Heart right ventricle (tissue), 16 donors: ENCODE measurements at regions of chr3 and their contacts with region 1.

Region 1: DNA sequence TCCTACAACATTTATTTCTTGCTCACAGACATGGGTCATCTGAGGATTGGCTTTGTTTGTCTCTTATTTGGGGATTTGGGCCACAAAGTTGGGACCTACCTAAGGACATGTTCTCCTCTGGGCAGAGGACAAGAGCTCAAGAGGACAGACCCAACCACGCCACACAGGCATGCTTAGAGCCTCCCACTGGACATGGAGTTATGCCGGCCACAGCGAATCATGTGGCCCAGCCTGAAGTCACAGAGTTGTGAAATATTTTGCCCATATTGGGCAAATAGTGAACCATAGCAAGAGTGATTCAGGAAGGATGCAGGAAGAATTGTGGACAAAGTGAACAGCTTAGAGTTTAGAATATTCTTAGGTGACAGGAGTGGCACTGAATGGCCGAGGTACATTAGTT is 9.9 kb downstream of the TRAK1 start:
- DNase-seq: peak; percentile 23 to 43
- ATAC-seq: peak; percentile 40 to 80 (median 61)
- H3K4me3 ChIP-seq: no peak overlapping the region
- H3K27ac ChIP-seq: peak overlapping the region in 9 of 10 donors; percentile 16 to 81 (median 63)
- H3K4me1 ChIP-seq: peaks cover 26 to 78% (median 68%) of the 10 kb centered on the region in 9 donors
- H3K27me3 ChIP-seq: no peaks in the 10 kb centered on the region
- CTCF ChIP-seq: no peak

Region 2: DNA sequence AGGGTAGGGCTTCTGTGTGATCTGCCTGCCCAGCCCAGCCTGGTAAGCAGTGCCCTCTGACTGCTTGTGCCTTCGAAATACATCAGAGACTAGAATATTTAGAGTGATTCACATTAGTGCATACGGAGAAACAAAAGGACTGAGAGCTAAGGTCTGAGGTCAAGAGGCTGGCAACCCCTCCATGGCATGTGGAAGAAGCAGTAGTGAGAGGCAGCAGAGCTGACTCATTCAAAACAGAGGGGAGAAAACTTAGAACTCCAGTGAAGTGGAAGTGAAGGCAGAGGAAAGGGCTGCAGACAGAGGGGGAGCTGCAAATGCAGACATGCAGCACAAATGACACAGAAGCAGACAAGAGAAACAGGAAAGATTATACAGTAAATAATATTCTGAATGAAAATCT is 200.8 kb before region 1 on chr3:
- intact Hi-C with region 1: loop called in 9 of 10 experiments (anchors 1 to 5 kb)
- DNase-seq: no peak
- ATAC-seq: no peak
- H3K4me3 ChIP-seq: no peak overlapping the region
- H3K27ac ChIP-seq: peak overlapping the region in 1 of 10 donors; percentile 3
- H3K4me1 ChIP-seq: peaks cover 0 to 22% (median 0%) of the 10 kb centered on the region in 9 donors
- H3K27me3 ChIP-seq: no peaks in the 10 kb centered on the region
- CTCF ChIP-seq: no peak

Region 3: DNA sequence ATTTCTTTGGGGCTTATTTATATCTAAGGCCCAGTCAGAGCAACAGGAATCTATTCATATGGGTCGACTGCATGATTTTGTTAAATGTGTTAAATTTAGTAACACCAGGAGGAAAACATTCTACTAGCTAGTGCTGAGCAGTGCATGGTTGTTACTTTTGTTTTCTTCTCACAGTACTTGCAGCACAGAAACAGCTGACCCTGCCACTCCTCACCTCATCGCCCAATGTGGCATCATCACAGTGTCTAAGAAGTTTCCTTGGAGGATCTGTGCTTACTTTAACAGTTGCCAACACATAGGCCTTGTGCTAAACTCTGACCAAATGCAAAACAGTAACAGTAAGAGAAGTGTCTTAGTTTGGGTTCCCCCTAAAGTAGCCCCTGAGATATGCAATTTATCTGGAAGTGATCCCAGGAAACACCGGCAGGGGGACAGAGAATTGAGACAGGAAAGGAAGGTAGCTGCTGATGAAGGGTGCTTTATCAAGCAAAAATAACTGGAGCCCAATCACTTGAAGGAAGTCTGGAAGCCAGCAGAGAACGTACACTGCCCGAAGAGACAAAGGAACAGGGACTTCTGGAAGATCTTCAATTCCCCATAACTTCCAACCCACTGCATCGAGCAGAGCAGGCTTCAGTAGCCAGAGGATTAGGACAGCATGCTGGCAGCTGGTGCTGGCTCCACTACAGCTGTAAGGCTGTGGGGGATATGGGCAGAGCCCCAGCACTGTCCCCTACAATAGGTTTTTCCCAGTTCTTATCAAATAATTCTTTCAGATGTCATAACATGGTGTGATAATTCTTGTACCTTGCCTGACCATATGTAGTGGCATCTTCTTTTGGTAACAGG is 103.1 kb before region 1 on chr3:
- intact Hi-C with region 1: loop called in 3 of 10 experiments (anchors 5 kb)
- DNase-seq: no peak
- ATAC-seq: peak in 7 of 8 donors; percentile 41 to 73 (median 58)
- H3K4me3 ChIP-seq: no peak overlapping the region
- H3K27ac ChIP-seq: peak overlapping the region in 2 of 10 donors; percentile 2 to 50
- H3K4me1 ChIP-seq: peaks cover 0 to 17% (median 12%) of the 10 kb centered on the region in 9 donors
- H3K27me3 ChIP-seq: no peaks in the 10 kb centered on the region
- CTCF ChIP-seq: peak; percentile 30 to 63 (median 47)

Region 4: GRCh38 chr3:42067326-42067725 is 33.7 kb before region 1 on chr3:
- intact Hi-C with region 1: loop called in 2 of 10 experiments (anchors 2 to 5 kb)
- DNase-seq: peak in 1 of 2 donors; percentile 44
- ATAC-seq: peak in 7 of 8 donors; percentile 47 to 73 (median 64)
- H3K4me3 ChIP-seq: peak overlapping the region in 4 of 10 donors; percentile 10 to 18 (median 16)
- H3K27ac ChIP-seq: peak overlapping the region; percentile 82 to 95 (median 90)
- H3K4me1 ChIP-seq: peaks cover 35 to 100% (median 90%) of the 10 kb centered on the region in 9 donors
- H3K27me3 ChIP-seq: no peaks in the 10 kb centered on the region
- CTCF ChIP-seq: no peak